ENCODE measurements at regions of chrX and their contacts with region 1.

Region 1: GRCh38 chrX:103585411-103586313 is at the start of gene TCEAL4:
- DNase-seq: no peak
- ATAC-seq: peak; percentile 97
- H3K4me3 ChIP-seq: peak within 1 kb of the TSS; percentile 68 to 69
- H3K27ac ChIP-seq: peak within 1 kb of the TSS; percentile 56
- H3K4me1 ChIP-seq: peaks cover 0 to 4% of the 10 kb centered on the region in 2 experiments; a peak in 1 of 4 replicates
- H3K27me3 ChIP-seq: no peaks in the 10 kb centered on the region
- CTCF ChIP-seq: no peak
- POLR2A ChIP-seq: no peak
- RAD21 ChIP-seq: no peak
- total RNA-seq, gene TCEAL4: 23.5 TPM

Region 2: GRCh38 chrX:103674531-103675454 is 89.1 kb after region 1 on chrX:
- CTCF ChIA-PET with region 1: no interaction called
- POLR2A ChIA-PET with region 1: no interaction called
- RAD21 ChIA-PET with region 1: no interaction called
- intact Hi-C with region 1: loop called (anchors 10 kb)
- DNase-seq: no peak
- ATAC-seq: peak; percentile 38; the same call in 1 of the 2 replicates
- H3K4me3 ChIP-seq: no peak overlapping the region
- H3K27ac ChIP-seq: no peak overlapping the region
- H3K4me1 ChIP-seq: no peaks in the 10 kb centered on the region
- H3K27me3 ChIP-seq: no peaks in the 10 kb centered on the region
- CTCF ChIP-seq: no peak
- POLR2A ChIP-seq: no peak
- RAD21 ChIP-seq: no peak

Region 3: DNA sequence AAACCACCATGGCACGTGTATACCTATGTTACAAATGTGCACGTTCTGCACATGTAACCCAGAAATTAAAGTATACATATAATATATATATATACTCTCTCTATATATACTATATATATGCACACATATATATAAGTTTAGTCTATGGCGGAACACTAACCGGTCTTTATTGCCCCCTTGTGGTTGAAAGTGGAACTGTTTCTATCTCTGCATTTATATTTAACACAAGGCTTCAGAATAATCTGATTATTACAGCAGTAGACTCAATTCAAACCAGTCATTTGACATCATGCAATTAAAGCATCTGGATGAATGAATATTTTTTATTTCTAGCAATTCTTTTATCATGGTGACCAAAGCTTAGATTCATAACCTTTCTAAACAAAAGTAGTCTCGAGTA is 231.8 kb after region 1 on chrX:
- CTCF ChIA-PET with region 1: no interaction called
- POLR2A ChIA-PET with region 1: no interaction called
- RAD21 ChIA-PET with region 1: no interaction called
- intact Hi-C with region 1: no loop called
- DNase-seq: peak; percentile 15
- ATAC-seq: peak; percentile 59
- H3K4me3 ChIP-seq: no peak overlapping the region
- H3K27ac ChIP-seq: no peak overlapping the region
- H3K4me1 ChIP-seq: no peaks in the 10 kb centered on the region
- H3K27me3 ChIP-seq: no peaks in the 10 kb centered on the region
- CTCF ChIP-seq: peak; percentile 40 to 44 (median 42); a peak in 4 of 6 replicates
- POLR2A ChIP-seq: no peak
- RAD21 ChIP-seq: peak; percentile 51